PC-9 (cell line): ENCODE measurements at regions of chr5 and their contacts with region 1.

Region 1: GRCh38 chr5:68252673-68253623 is 37.4 kb downstream of the PIK3R1 start:
- DNase-seq: peak in 1 of 2 experiments; percentile 46
- H3K4me3 ChIP-seq: no peak overlapping the region
- H3K27ac ChIP-seq: no peak overlapping the region
- H3K4me1 ChIP-seq: no peaks in the 10 kb centered on the region
- H3K27me3 ChIP-seq: no peaks in the 10 kb centered on the region
- CTCF ChIP-seq: peak; percentile 79

Region 2: GRCh38 chr5:66814146-66814991 is 1438.6 kb before region 1 on chr5:
- CTCF ChIA-PET with region 1: no interaction called
- POLR2A ChIA-PET with region 1: no interaction called
- intact Hi-C with region 1: loop called (anchors 5 kb)
- DNase-seq: peak in 1 of 2 experiments; percentile 29
- H3K4me3 ChIP-seq: no peak overlapping the region
- H3K27ac ChIP-seq: no peak overlapping the region
- H3K4me1 ChIP-seq: no peaks in the 10 kb centered on the region
- H3K27me3 ChIP-seq: no peaks in the 10 kb centered on the region
- CTCF ChIP-seq: peak; percentile 93

Region 3: GRCh38 chr5:67156976-67157583 is 1095.9 kb before region 1 on chr5:
- CTCF ChIA-PET with region 1: interaction called, 4 read pairs
- POLR2A ChIA-PET with region 1: no interaction called
- intact Hi-C with region 1: loop called (anchors 2 kb)
- DNase-seq: peak in 1 of 2 experiments; percentile 45
- H3K4me3 ChIP-seq: no peak overlapping the region
- H3K27ac ChIP-seq: no peak overlapping the region
- H3K4me1 ChIP-seq: peaks cover 29% of the 10 kb centered on the region
- H3K27me3 ChIP-seq: no peaks in the 10 kb centered on the region
- CTCF ChIP-seq: peak; percentile 85

Region 4: DNA sequence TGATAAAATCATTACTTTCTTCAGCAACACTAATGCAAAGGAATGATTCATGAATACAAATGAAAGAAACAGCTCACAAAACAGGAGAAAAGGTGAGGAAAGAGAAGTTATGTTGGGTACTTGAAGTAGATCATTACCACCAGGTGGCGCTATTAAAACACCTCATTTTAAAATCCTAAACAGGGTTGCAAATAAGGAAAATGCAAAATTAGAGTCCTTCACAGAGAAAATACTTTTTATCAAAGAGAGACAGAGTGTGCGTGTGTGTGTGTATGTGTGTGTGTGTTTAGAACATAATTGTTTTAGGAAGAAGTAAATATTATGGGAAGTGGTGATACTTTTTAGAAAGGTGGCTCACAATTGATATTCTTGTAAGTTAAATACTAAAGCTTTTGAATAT is 1006.8 kb before region 1 on chr5:
- CTCF ChIA-PET with region 1: interaction called, 9 read pairs
- POLR2A ChIA-PET with region 1: no interaction called
- intact Hi-C with region 1: loop called (anchors 1 kb)
- DNase-seq: peak in 1 of 2 experiments; percentile 39
- H3K4me3 ChIP-seq: no peak overlapping the region
- H3K27ac ChIP-seq: no peak overlapping the region
- H3K4me1 ChIP-seq: no peaks in the 10 kb centered on the region
- H3K27me3 ChIP-seq: 0 out of 2 replicates have a peak, but pooled peaks cover 3% of the 10 kb centered on the region
- CTCF ChIP-seq: peak; percentile 84

Region 5: GRCh38 chr5:67493676-67494075 is 759.3 kb before region 1 on chr5:
- CTCF ChIA-PET with region 1: no interaction called
- POLR2A ChIA-PET with region 1: no interaction called
- intact Hi-C with region 1: loop called (anchors 5 kb)
- DNase-seq: peak in 1 of 2 experiments; percentile 7
- H3K4me3 ChIP-seq: no peak overlapping the region
- H3K27ac ChIP-seq: no peak overlapping the region
- H3K4me1 ChIP-seq: no peaks in the 10 kb centered on the region
- H3K27me3 ChIP-seq: no peaks in the 10 kb centered on the region
- CTCF ChIP-seq: no peak